CD14-positive monocyte (primary cell): ENCODE measurements at regions of chr1 and their contacts with region 1.

Region 1: GRCh38 chr1:33466159-33466558 is 6.3 kb upstream of the ZSCAN20 start:
- DNase-seq: no peak
- H3K4me3 ChIP-seq: no peak overlapping the region
- H3K4me3 Mint-ChIP-seq: no peak overlapping the region
- H3K27ac ChIP-seq: no peak overlapping the region
- H3K27ac Mint-ChIP-seq: peak overlapping the region in 2 of 7 donors; percentile 17 to 20
- H3K4me1 ChIP-seq: peaks cover 29 to 32% of the 10 kb centered on the region in 2 donors
- H3K4me1 Mint-ChIP-seq: peaks cover 41% of the 10 kb centered on the region
- H3K27me3 ChIP-seq: no peaks in the 10 kb centered on the region
- H3K27me3 Mint-ChIP-seq: peaks cover 0 to 4% (median 2%) of the 10 kb centered on the region in 3 donors
- CTCF ChIP-seq: no peak

Region 2: DNA sequence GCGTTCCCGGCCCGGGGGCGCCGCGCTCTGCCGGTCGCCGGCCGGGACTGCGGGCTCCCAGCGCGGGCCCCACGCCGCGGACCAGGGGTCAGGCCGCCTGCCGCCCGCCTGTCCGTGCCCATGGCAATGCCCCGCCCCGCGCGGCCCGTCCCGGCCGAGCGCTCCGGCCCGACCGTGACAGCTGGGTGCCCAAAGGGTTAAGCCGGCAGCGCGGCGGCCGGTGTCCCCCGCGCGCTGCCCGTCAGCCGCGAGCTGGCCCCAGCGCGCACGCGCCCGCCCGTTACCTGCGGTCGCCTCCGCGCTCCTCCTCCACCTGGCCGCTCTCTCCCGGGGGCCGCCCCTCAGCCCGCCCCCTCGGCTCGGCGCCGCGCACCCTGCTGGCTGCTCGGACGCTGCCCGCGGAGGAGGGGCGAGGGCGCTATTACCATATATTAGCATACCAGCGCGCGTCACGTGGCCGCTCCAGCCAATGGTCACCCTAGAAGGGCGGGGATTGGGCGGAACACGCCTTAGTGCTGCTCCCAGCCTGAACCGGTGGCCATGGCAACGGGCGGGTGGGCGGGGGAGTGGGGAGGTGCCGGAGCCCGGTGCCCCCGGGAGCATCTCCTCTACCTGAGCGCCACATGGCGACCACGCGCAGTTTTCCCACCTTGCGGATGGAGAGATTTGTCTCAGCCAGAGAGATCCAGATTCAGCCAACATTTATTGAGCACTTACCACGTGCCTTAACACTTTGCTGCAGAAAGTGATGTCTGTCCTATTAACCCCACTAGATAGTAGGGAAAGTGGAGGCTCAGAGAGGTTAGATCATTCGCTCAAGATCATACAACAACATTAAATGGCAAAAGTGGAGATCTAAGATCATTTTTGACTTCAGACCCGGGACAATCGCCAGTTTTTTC is 35.2 kb before region 1 on chr1 and contains the start of gene PHC2:
- intact Hi-C with region 1: loop called in 1 of 2 experiments (anchors 5 kb)
- DNase-seq: peak; percentile 88 to 96 (median 94)
- H3K4me3 ChIP-seq: peak within 1 kb of the TSS; percentile 40 to 80 (median 77)
- H3K4me3 Mint-ChIP-seq: peak within 1 kb of the TSS; percentile 26 to 67
- H3K27ac ChIP-seq: no peak within 1 kb of the TSS
- H3K27ac Mint-ChIP-seq: peak within 1 kb of the TSS in 3 of 7 donors; percentile 11 to 83 (median 61)
- H3K4me1 ChIP-seq: peaks cover 42 to 48% of the 10 kb centered on the region in 2 donors
- H3K4me1 Mint-ChIP-seq: peaks cover 30% of the 10 kb centered on the region
- H3K27me3 ChIP-seq: peaks cover 10 to 19% of the 10 kb centered on the region in 2 donors
- H3K27me3 Mint-ChIP-seq: peaks cover 0 to 2% (median 0%) of the 10 kb centered on the region in 3 donors
- CTCF ChIP-seq: peak; percentile 25
- polyA plus RNA-seq, gene PHC2: 18.9 to 85.3 (median 53.1) TPM